ENCODE measurements at regions of chr7 and their contacts with region 1.

Region 1: GRCh38 chr7:74039346-74039745 is 11.4 kb downstream of the ELN start:
- DNase-seq: no peak
- H3K4me3 ChIP-seq: no peak overlapping the region
- H3K27ac ChIP-seq: peak overlapping the region; percentile 79 to 98
- H3K4me1 ChIP-seq: peaks cover 11 to 66% of the 10 kb centered on the region in 2 donors
- H3K27me3 ChIP-seq: no peaks in the 10 kb centered on the region
- CTCF ChIP-seq: no peak

Region 2: DNA sequence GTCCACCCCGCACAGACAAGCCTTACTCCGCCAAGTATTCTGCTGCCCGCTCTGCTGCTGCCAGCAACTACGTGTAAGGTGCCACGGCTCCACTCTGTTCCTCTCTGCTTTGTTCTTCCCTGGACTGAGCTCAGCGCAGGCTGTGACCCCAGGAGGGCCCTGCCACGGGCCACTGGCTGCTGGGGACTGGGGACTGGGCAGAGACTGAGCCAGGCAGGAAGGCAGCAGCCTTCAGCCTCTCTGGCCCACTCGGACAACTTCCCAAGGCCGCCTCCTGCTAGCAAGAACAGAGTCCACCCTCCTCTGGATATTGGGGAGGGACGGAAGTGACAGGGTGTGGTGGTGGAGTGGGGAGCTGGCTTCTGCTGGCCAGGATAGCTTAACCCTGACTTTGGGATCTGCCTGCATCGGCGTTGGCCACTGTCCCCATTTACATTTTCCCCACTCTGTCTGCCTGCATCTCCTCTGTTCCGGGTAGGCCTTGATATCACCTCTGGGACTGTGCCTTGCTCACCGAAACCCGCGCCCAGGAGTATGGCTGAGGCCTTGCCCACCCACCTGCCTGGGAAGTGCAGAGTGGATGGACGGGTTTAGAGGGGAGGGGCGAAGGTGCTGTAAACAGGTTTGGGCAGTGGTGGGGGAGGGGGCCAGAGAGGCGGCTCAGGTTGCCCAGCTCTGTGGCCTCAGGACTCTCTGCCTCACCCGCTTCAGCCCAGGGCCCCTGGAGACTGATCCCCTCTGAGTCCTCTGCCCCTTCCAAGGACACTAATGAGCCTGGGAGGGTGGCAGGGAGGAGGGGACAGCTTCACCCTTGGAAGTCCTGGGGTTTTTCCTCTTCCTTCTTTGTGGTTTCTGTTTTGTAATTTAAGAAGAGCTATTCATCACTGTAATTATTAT is 207.3 kb before region 1 on chr7:
- intact Hi-C with region 1: no loop called
- DNase-seq: no peak
- H3K4me3 ChIP-seq: no peak overlapping the region
- H3K27ac ChIP-seq: no peak overlapping the region
- H3K4me1 ChIP-seq: peaks cover 3 to 9% of the 10 kb centered on the region in 2 donors
- H3K27me3 ChIP-seq: no peaks in the 10 kb centered on the region
- CTCF ChIP-seq: no peak

Region 3: GRCh38 chr7:74053589-74054186 is 14.3 kb after region 1 on chr7:
- intact Hi-C with region 1: loop called (anchors 2 kb)
- DNase-seq: no peak
- H3K4me3 ChIP-seq: no peak overlapping the region
- H3K27ac ChIP-seq: peak overlapping the region in 1 of 2 donors; percentile 49
- H3K4me1 ChIP-seq: peaks cover 0 to 22% of the 10 kb centered on the region in 2 donors
- H3K27me3 ChIP-seq: no peaks in the 10 kb centered on the region
- CTCF ChIP-seq: no peak